GM12878 (cell line): ENCODE measurements at regions of chr1 and their contacts with region 1.

Region 1: GRCh38 chr1:54355931-54356679 is 50.1 kb downstream of the SSBP3 start:
- DNase-seq: no peak
- ATAC-seq: peak; percentile 63
- H3K4me3 ChIP-seq: peak overlapping the region; percentile 34
- H3K27ac ChIP-seq: peak overlapping the region; percentile 66
- H3K4me1 ChIP-seq: peaks cover 20% of the 10 kb centered on the region
- H3K27me3 ChIP-seq: no peaks in the 10 kb centered on the region
- CTCF ChIP-seq: no peak
- EP300 ChIP-seq: no peak
- POLR2A ChIP-seq: no peak
- RAD21 ChIP-seq: no peak

Region 2: DNA sequence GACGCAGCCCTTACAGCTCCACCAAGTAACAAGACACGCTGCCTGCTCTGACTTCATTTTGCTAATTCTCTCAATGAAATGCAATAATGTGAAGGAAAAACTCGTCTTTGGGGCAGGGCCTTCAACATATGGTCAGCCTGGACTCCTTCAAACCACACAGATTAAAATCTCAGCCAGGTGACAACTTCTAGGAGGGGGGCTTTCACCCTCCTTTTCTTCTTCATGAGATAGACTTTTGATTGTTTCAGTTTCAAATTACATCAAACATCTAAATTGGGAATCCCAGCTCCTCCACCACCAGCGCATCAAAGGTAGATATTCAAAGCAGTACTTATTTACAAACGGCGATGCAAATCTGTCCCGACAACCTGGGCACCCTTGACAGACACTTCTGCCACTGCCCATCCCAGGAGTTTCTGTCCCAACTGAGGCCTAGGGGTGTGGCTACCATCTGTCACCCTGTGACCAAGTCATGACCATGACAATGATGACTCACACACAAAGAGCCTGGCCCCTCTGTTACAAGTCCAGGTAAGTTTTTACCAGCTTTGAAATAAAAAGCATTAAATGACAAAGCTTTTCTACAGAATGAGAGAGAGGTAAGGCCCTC is 20.4 kb after region 1 on chr1:
- CTCF ChIA-PET with region 1: no interaction called
- POLR2A ChIA-PET with region 1: interaction called, 7 read pairs
- RAD21 ChIA-PET with region 1: interaction called, 6 read pairs
- SMC1A ChIA-PET with region 1: interaction called, 6 read pairs
- in situ Hi-C with region 1: no loop called
- intact Hi-C with region 1: loop called (anchors 1 kb)
- DNase-seq: peak; percentile 84
- ATAC-seq: peak; percentile 67
- H3K4me3 ChIP-seq: peak overlapping the region; percentile 58
- H3K27ac ChIP-seq: peak overlapping the region; percentile 93
- H3K4me1 ChIP-seq: peaks cover 89% of the 10 kb centered on the region
- H3K27me3 ChIP-seq: no peaks in the 10 kb centered on the region
- CTCF ChIP-seq: no peak
- EP300 ChIP-seq: peak; percentile 71 to 76; a peak in 2 of 4 replicates
- POLR2A ChIP-seq: no peak
- RAD21 ChIP-seq: no peak